ENCODE measurements at regions of chr5 and their contacts with region 1.

Region 1: DNA sequence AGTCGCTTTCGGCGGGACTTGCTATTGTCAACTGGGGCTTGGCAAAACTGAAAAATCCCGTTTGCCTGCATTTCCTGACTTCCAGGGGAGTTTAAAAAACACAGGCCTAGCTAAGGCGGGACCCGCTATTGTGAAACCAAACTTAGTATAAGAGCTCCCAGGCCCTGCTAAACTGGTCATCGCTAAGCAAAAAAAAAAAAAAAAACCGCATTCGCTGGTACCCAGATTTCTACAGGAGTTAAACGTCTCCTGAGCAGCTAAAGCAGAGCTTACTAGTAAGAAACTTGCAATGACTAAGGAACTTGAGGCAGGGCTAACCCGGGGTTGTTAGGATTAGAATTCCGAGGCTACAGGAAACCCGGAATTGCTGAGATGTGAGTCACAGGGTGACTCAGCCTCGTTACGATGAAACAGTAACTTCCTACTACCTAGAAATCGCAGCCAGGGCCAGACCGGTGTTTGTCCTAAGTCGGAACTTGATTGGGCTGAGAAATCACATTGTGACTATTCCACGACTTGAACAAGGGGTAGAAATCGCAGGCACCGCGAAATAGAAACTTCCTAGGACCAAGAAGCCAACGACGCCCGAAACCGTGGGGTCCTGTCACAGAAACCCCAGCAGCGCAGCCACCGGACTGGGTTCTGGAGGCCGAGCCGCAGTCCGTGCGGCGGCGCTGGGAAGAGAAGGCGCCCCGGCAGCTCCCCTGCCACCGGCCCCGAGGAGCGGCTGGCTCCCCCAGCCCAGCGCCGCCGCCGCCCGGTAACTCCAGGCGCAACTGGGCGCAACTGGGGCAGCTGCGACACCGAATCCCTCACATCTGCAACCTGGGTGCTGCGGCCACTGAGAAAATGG is 89.5 kb downstream of the ANXA2R start:
- DNase-seq: peak; percentile 35 to 90 (median 61)
- ATAC-seq: peak; percentile 41
- H3K4me3 ChIP-seq: peak overlapping the region; percentile 75
- H3K4me3 Mint-ChIP-seq: peak overlapping the region; percentile 98
- H3K27ac ChIP-seq: peak overlapping the region; percentile 96 to 98
- H3K27ac Mint-ChIP-seq: peak overlapping the region; percentile 99
- H3K4me1 ChIP-seq: peaks cover 45% of the 10 kb centered on the region
- H3K4me1 Mint-ChIP-seq: peaks cover 30% of the 10 kb centered on the region
- H3K27me3 ChIP-seq: no peaks in the 10 kb centered on the region
- H3K27me3 Mint-ChIP-seq: no peaks in the 10 kb centered on the region
- CTCF ChIP-seq: no peak

Region 2: GRCh38 chr5:42970636-42971559 is 20.2 kb after region 1 on chr5:
- CTCF ChIA-PET with region 1: interaction called, 7 read pairs
- POLR2A ChIA-PET with region 1: interaction called, 11 read pairs
- intact Hi-C with region 1: loop called in 1 of 2 experiments (anchors 2 kb)
- DNase-seq: peak in 2 of 14 experiments; percentile 37 to 49
- ATAC-seq: no peak
- H3K4me3 ChIP-seq: no peak overlapping the region
- H3K4me3 Mint-ChIP-seq: no peak overlapping the region
- H3K27ac ChIP-seq: no peak overlapping the region
- H3K27ac Mint-ChIP-seq: no peak overlapping the region
- H3K4me1 ChIP-seq: peaks cover 4% of the 10 kb centered on the region
- H3K4me1 Mint-ChIP-seq: peaks cover 6% of the 10 kb centered on the region
- H3K27me3 ChIP-seq: no peaks in the 10 kb centered on the region
- H3K27me3 Mint-ChIP-seq: no peaks in the 10 kb centered on the region
- CTCF ChIP-seq: peak; percentile 27

Region 3: GRCh38 chr5:43409809-43410271 is 459.2 kb after region 1 on chr5:
- CTCF ChIA-PET with region 1: no interaction called
- POLR2A ChIA-PET with region 1: no interaction called
- intact Hi-C with region 1: no loop called
- DNase-seq: no peak
- ATAC-seq: no peak
- H3K4me3 ChIP-seq: no peak overlapping the region
- H3K4me3 Mint-ChIP-seq: no peak overlapping the region
- H3K27ac ChIP-seq: no peak overlapping the region
- H3K27ac Mint-ChIP-seq: no peak overlapping the region
- H3K4me1 ChIP-seq: no peaks in the 10 kb centered on the region
- H3K4me1 Mint-ChIP-seq: no peaks in the 10 kb centered on the region
- H3K27me3 ChIP-seq: no peaks in the 10 kb centered on the region
- H3K27me3 Mint-ChIP-seq: no peaks in the 10 kb centered on the region
- CTCF ChIP-seq: no peak